MCF 10A (cell line): ENCODE measurements at regions of chr3 and their contacts with region 1.

Region 1: DNA sequence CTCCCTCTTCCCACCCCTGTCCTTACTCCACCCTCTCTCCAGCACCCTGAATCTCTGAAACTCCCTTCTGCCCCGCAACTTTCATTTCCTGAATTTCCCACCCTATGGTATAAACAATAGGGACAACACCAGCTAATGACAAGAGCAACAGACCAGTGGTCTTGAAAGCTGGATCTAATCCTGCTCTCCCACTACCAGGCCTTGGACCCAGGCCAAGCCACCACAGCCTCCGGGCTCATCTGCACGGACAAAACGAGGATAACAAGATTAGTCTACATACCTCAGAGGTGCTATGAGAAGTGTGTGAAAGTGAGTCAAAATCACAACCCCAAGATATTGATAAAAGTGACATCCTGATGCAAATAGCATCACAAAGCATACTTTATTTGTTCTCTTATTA is 128.6 kb downstream of the ERC2 start:
- DNase-seq: no peak
- H3K4me3 Mint-ChIP-seq: no peak overlapping the region
- H3K27ac Mint-ChIP-seq: no peak overlapping the region
- H3K4me1 Mint-ChIP-seq: peaks cover 6% of the 10 kb centered on the region
- H3K27me3 Mint-ChIP-seq: peaks cover 24% of the 10 kb centered on the region
- CTCF ChIP-seq: no peak

Region 2: GRCh38 chr3:56323986-56324420 is 15.7 kb before region 1 on chr3:
- CTCF ChIA-PET with region 1: interaction called, 39 read pairs
- POLR2A ChIA-PET with region 1: no interaction called
- intact Hi-C with region 1: no loop called
- DNase-seq: peak; percentile 76
- H3K4me3 Mint-ChIP-seq: no peak overlapping the region
- H3K27ac Mint-ChIP-seq: peak overlapping the region; percentile 50
- H3K4me1 Mint-ChIP-seq: peaks cover 12% of the 10 kb centered on the region
- H3K27me3 Mint-ChIP-seq: peaks cover 18% of the 10 kb centered on the region
- CTCF ChIP-seq: no peak

Region 3: DNA sequence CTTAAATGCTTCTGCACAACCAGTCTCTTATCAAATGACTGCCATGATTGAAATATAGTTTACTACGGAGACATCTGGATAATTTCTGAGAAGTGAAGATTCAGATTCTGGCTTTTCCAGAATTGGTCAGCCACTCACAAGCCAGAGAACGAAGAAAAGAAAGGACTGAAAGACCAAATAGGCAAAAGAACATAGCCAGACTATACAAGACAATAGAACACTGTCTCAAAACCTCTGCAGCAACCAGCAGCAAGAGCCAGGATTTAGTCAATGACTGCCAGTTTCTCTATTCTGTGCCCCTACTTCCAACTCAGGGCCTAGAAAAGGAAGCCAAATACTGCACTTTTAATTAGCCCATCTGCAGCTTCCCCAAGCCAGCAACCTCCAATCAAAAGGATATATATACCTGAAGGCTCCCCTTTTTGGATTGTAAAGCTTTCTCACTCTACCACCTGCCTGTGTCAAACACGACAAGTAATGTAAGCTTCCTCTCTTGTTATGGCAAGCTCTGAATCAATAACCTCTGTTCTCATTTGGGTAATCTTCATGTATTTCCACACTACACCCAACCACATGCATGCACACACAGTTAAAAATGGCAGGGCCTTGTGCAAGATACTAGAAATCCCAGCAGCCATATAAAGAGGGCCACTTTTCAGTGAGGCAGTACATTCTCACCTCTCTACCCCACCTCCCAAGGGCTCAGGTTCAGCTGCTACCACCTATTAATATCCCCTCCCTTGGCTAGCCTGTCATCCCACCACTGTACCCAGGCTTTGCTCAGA is 31.5 kb after region 1 on chr3:
- CTCF ChIA-PET with region 1: interaction called, 15 read pairs
- POLR2A ChIA-PET with region 1: no interaction called
- intact Hi-C with region 1: no loop called
- DNase-seq: no peak
- H3K4me3 Mint-ChIP-seq: no peak overlapping the region
- H3K27ac Mint-ChIP-seq: no peak overlapping the region
- H3K4me1 Mint-ChIP-seq: no peaks in the 10 kb centered on the region
- H3K27me3 Mint-ChIP-seq: no peaks in the 10 kb centered on the region
- CTCF ChIP-seq: no peak

Region 4: DNA sequence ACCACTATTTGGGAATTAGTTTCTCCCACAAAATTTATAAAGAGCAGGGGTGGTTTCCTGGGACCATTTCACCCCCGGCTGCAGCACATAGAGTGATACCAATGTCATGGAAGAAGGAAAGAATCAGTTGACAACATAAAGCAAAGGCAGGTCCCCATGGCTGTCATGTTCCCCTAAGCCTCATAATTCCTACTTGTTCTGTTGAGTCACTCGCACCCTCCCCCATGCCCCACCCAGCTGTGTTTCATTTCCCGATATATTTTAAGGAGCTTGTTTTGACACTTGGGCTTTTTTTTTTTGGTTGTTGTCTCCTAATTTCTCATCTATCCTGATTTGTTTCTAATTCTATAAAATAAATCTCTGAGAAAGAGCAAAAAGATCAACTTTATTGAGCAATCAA is 103.7 kb after region 1 on chr3:
- CTCF ChIA-PET with region 1: interaction called, 133 read pairs
- POLR2A ChIA-PET with region 1: interaction called, 5 read pairs
- intact Hi-C with region 1: loop called (anchors 1 kb)
- DNase-seq: no peak
- H3K4me3 Mint-ChIP-seq: no peak overlapping the region
- H3K27ac Mint-ChIP-seq: no peak overlapping the region
- H3K4me1 Mint-ChIP-seq: peaks cover 6% of the 10 kb centered on the region
- H3K27me3 Mint-ChIP-seq: no peaks in the 10 kb centered on the region
- CTCF ChIP-seq: no peak

Region 5: GRCh38 chr3:56494686-56495322 is 155.1 kb after region 1 on chr3:
- CTCF ChIA-PET with region 1: interaction called, 104 read pairs
- POLR2A ChIA-PET with region 1: interaction called, 8 read pairs
- intact Hi-C with region 1: loop called (anchors 1 kb)
- DNase-seq: peak; percentile 92
- H3K4me3 Mint-ChIP-seq: no peak overlapping the region
- H3K27ac Mint-ChIP-seq: no peak overlapping the region
- H3K4me1 Mint-ChIP-seq: no peaks in the 10 kb centered on the region
- H3K27me3 Mint-ChIP-seq: peaks cover 70% of the 10 kb centered on the region
- CTCF ChIP-seq: peak; percentile 90

Region 6: GRCh38 chr3:56547486-56547885 is 207.8 kb after region 1 on chr3:
- CTCF ChIA-PET with region 1: interaction called, 14 read pairs
- POLR2A ChIA-PET with region 1: no interaction called
- intact Hi-C with region 1: loop called (anchors 5 kb)
- DNase-seq: peak; percentile 28
- H3K4me3 Mint-ChIP-seq: no peak overlapping the region
- H3K27ac Mint-ChIP-seq: no peak overlapping the region
- H3K4me1 Mint-ChIP-seq: no peaks in the 10 kb centered on the region
- H3K27me3 Mint-ChIP-seq: peaks cover 69% of the 10 kb centered on the region
- CTCF ChIP-seq: peak; percentile 8